Activated CD4-positive, alpha-beta T cell treated with anti-CD3 and anti-CD28 coated beads for 36 hours (primary cell): ENCODE measurements at regions of chr18 and their contacts with region 1.

Region 1: DNA sequence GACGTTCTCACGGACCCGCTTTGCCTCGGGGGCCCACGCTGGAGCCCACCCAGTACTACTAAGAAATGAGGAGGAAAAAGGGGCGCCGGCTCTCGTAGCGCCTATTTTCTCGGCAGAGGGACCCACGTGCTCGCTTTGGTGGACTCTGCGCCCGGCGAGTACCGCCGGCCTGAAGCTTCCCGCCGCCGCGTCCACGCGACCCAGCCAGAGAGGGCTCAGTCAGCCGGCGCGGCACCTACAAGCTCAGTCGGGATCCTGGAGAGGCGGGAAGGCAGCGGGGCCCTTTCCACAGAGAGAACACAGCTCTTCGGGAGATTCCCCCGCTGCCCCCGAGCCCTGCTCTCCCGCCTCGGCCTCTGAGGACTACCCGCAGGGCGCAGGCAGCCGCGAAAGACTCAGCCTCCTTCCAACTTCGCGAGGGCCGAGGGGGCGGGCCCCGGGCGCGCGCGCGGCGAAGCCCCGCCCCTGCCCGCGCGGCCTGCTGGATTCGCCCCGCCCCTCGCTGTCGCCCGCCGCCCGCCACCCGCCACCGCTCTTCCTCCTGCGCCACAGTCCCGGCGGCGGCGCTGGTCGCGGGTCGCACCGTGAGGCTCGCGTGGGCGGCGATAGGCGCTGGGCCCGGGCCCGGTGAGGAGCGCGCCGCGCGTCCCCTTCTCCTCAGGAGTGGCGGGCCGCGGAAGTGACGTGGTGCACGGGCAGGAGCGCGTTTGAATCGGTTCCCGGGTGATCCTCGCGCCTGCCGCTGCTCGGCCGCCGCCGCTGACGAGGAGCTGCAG is at the start of gene SMCHD1:
- DNase-seq: peak; percentile 97
- ATAC-seq: peak; percentile 78
- H3K4me3 Mint-ChIP-seq: peak within 1 kb of the TSS; percentile 95
- H3K27ac Mint-ChIP-seq: peak within 1 kb of the TSS; percentile 96
- H3K4me1 Mint-ChIP-seq: peaks cover 31% of the 10 kb centered on the region
- H3K27me3 Mint-ChIP-seq: no peaks in the 10 kb centered on the region
- total RNA-seq, gene SMCHD1: 89.5 to 121 TPM

Region 2: DNA sequence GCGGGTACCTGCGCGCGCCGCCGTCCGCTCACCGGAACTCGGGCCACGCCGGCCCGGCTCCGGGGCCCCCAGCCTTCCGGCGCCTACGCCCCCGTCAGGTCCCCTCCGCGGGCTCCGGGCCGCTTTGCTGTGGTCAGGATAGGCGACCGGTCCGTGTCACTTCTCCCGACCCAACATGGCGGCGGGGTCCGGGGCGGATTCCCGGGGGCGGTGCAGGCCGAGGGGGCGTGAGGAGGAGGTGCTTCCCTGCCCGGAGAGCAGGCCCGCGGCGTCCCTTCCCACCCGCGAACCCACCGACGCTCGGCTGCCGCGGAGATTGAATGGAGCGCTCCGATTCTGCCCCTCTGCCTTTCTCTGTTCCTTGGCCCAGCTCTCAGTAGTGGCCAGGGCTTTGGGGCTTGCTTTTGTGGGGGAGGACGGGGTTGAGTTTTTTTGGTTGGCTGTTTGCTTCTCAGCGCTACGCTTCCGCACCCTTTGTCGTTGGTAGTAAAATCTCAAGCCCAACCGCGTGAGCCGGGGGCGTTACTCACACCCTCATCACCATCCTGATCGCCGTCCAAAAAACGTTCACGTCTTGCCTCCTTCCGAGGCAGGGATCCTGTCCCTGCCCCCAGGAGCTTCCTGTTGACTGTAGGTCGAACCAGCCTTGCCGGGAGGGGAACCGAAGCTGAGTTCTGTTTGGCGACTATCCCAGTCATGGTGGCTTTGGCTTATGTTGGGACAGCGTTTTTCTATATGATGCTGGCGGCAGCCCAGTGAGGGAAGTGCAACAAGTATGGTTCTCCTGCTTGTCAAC is 1842.8 kb before region 1 on chr18:
- CTCF ChIA-PET with region 1: no interaction called
- POLR2A ChIA-PET with region 1: no interaction called
- intact Hi-C with region 1: loop called in 1 of 2 experiments (anchors 5 kb)
- DNase-seq: peak; percentile 85
- ATAC-seq: peak; percentile 65
- H3K4me3 Mint-ChIP-seq: peak overlapping the region; percentile 87
- H3K27ac Mint-ChIP-seq: peak overlapping the region; percentile 99
- H3K4me1 Mint-ChIP-seq: peaks cover 58% of the 10 kb centered on the region
- H3K27me3 Mint-ChIP-seq: no peaks in the 10 kb centered on the region

Region 3: GRCh38 chr18:2606335-2606734 is 49.0 kb before region 1 on chr18:
- CTCF ChIA-PET with region 1: no interaction called
- POLR2A ChIA-PET with region 1: interaction called, 5 read pairs
- intact Hi-C with region 1: loop called (anchors 1 to 2 kb)
- DNase-seq: no peak
- ATAC-seq: peak; percentile 54
- H3K4me3 Mint-ChIP-seq: peak overlapping the region; percentile 46
- H3K27ac Mint-ChIP-seq: peak overlapping the region; percentile 76
- H3K4me1 Mint-ChIP-seq: peaks cover 48% of the 10 kb centered on the region
- H3K27me3 Mint-ChIP-seq: no peaks in the 10 kb centered on the region

Region 4: GRCh38 chr18:2680216-2680792 is 24.9 kb after region 1 on chr18:
- CTCF ChIA-PET with region 1: interaction called, 4 read pairs
- POLR2A ChIA-PET with region 1: interaction called, 6 read pairs
- intact Hi-C with region 1: loop called in 1 of 2 experiments (anchors 2 kb)
- DNase-seq: no peak
- ATAC-seq: no peak
- H3K4me3 Mint-ChIP-seq: no peak overlapping the region
- H3K27ac Mint-ChIP-seq: peak overlapping the region; percentile 37
- H3K4me1 Mint-ChIP-seq: peaks cover 54% of the 10 kb centered on the region
- H3K27me3 Mint-ChIP-seq: no peaks in the 10 kb centered on the region

Region 5: DNA sequence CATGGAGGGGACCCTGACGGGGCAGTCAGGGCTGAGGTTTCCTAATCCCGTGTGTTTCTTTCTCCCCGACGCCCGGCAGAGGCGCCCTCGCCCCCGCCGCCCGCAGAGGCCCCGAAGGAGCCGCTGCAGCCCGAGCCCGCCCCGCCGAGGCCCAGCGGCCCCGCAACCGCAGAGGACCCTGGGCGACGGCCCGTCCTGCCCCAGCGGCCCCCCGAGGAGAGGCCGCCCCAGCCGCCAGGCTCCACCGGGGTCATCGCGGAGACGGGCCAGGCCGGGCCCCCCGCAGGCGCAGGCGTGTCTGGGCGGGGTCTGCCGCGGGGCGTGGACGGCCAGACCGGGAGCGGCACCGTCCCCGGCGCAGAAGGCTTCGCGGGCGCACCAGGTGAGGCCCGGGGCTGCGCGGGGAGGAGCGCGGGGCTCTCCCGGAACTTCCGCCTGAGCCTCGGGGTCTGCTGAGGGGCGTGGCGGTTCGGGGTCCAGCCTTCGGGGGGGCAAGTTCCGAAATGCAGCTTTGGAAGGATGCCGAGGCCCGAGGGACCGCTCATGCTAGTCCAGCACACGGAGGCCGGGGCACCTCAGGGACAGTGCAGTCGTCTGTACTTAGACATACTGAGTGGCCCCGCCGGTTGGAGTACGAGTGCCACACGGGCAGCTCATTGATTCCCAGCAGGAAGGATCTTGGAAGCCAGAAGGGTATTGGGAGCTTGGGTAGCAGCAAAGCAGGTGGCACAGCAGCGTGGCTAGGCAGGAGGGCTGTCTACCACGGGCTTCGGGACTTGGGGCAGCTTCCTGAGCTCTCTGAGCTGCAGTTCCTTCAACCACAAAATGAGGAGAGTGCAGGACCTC is 251.6 kb after region 1 on chr18:
- CTCF ChIA-PET with region 1: no interaction called
- POLR2A ChIA-PET with region 1: no interaction called
- intact Hi-C with region 1: loop called in 1 of 2 experiments (anchors 5 kb)
- DNase-seq: peak; percentile 63
- ATAC-seq: peak; percentile 67
- H3K4me3 Mint-ChIP-seq: peak overlapping the region; percentile 78
- H3K27ac Mint-ChIP-seq: peak overlapping the region; percentile 72
- H3K4me1 Mint-ChIP-seq: peaks cover 17% of the 10 kb centered on the region
- H3K27me3 Mint-ChIP-seq: no peaks in the 10 kb centered on the region

Region 6: GRCh38 chr18:3261371-3262246 is 606.2 kb after region 1 on chr18 and contains the start of gene MYL12B:
- CTCF ChIA-PET with region 1: no interaction called
- POLR2A ChIA-PET with region 1: no interaction called
- intact Hi-C with region 1: loop called in 1 of 2 experiments (anchors 5 kb)
- DNase-seq: peak; percentile 88
- ATAC-seq: peak; percentile 77
- H3K4me3 Mint-ChIP-seq: peak within 1 kb of the TSS; percentile 88
- H3K27ac Mint-ChIP-seq: peak within 1 kb of the TSS; percentile 96
- H3K4me1 Mint-ChIP-seq: peaks cover 59% of the 10 kb centered on the region
- H3K27me3 Mint-ChIP-seq: no peaks in the 10 kb centered on the region
- total RNA-seq, gene MYL12B: 282 to 301 TPM